ENCODE measurements at regions of chr21 and their contacts with region 1.

Region 1: GRCh38 chr21:42309753-42310221 is 5.4 kb downstream of the TFF3 start:
- DNase-seq: peak; percentile 86
- ATAC-seq: peak; percentile 93
- H3K4me3 Mint-ChIP-seq: no peak overlapping the region
- H3K27ac Mint-ChIP-seq: no peak overlapping the region
- H3K4me1 Mint-ChIP-seq: peaks cover 2% of the 10 kb centered on the region
- H3K27me3 Mint-ChIP-seq: no peaks in the 10 kb centered on the region
- CTCF ChIP-seq: peak; percentile 90

Region 2: GRCh38 chr21:42299324-42300044 is 10.3 kb before region 1 on chr21:
- CTCF ChIA-PET with region 1: interaction called, 34 read pairs
- POLR2A ChIA-PET with region 1: interaction called, 5 read pairs
- intact Hi-C with region 1: no loop called
- DNase-seq: peak; percentile 52
- ATAC-seq: peak; percentile 77
- H3K4me3 Mint-ChIP-seq: no peak overlapping the region
- H3K27ac Mint-ChIP-seq: no peak overlapping the region
- H3K4me1 Mint-ChIP-seq: peaks cover 14% of the 10 kb centered on the region
- H3K27me3 Mint-ChIP-seq: no peaks in the 10 kb centered on the region
- CTCF ChIP-seq: no peak

Region 3: GRCh38 chr21:42440187-42440792 is 130.5 kb after region 1 on chr21:
- CTCF ChIA-PET with region 1: interaction called, 10 read pairs
- POLR2A ChIA-PET with region 1: no interaction called
- intact Hi-C with region 1: no loop called
- DNase-seq: peak; percentile 85
- ATAC-seq: peak; percentile 67
- H3K4me3 Mint-ChIP-seq: peak overlapping the region; percentile 44
- H3K27ac Mint-ChIP-seq: peak overlapping the region; percentile 94
- H3K4me1 Mint-ChIP-seq: peaks cover 58% of the 10 kb centered on the region
- H3K27me3 Mint-ChIP-seq: peaks cover 2% of the 10 kb centered on the region
- CTCF ChIP-seq: no peak

Region 4: GRCh38 chr21:42449296-42449927 is 139.6 kb after region 1 on chr21:
- CTCF ChIA-PET with region 1: interaction called, 25 read pairs
- POLR2A ChIA-PET with region 1: no interaction called
- intact Hi-C with region 1: no loop called
- DNase-seq: no peak
- ATAC-seq: no peak
- H3K4me3 Mint-ChIP-seq: no peak overlapping the region
- H3K27ac Mint-ChIP-seq: peak overlapping the region; percentile 84
- H3K4me1 Mint-ChIP-seq: peaks cover 57% of the 10 kb centered on the region
- H3K27me3 Mint-ChIP-seq: no peaks in the 10 kb centered on the region
- CTCF ChIP-seq: no peak

Region 5: GRCh38 chr21:42524349-42525151 is 214.8 kb after region 1 on chr21:
- CTCF ChIA-PET with region 1: interaction called, 12 read pairs
- POLR2A ChIA-PET with region 1: no interaction called
- intact Hi-C with region 1: no loop called
- DNase-seq: peak; percentile 82
- ATAC-seq: peak; percentile 47
- H3K4me3 Mint-ChIP-seq: peak overlapping the region; percentile 42
- H3K27ac Mint-ChIP-seq: peak overlapping the region; percentile 36
- H3K4me1 Mint-ChIP-seq: peaks cover 45% of the 10 kb centered on the region
- H3K27me3 Mint-ChIP-seq: no peaks in the 10 kb centered on the region
- CTCF ChIP-seq: no peak

Measured in activated CD8-positive, alpha-beta T cell treated with anti-CD3 and anti-CD28 coated beads for 36 hours (primary cell).